CD4-positive, alpha-beta memory T cell (primary cell): ENCODE measurements at regions of chr5 and their contacts with region 1.

Region 1: DNA sequence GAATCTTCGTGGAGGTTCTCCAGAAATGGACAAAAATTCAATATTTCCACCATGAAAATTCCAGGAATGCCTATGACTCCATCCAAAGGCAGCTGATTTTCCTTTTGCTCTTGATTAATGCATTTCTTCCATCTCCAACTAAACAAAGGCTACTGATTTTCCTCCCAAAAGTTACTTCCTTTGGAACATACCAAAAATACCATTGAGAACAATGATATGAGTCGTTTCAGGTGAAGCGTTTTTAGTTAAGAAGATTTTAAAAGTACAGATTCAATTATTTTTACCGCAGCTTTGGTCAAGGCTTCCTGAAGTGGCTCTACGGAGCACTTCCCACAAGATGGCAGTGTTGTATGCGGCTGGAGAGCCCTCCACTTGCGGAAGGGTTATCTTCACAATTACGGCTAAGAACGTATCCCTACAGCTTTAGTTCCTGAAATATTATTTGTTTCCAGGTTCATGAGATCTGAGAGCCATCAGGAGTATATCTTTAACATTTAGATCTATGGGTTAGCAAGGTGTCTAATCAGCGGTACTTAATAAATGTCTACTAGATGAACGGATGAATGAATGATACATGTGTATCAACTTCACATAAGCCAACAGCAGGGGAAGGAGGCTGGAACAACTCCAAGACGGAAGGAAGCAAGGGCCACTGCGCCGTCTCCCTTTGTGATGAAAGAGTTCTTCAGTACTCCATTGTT is 35.9 kb upstream of the ARSB start:
- DNase-seq: peak in 3 of 5 donors; percentile 14 to 21 (median 18)
- H3K4me3 ChIP-seq: no peak overlapping the region
- H3K4me3 Mint-ChIP-seq: peak overlapping the region in 3 of 8 donors; percentile 11 to 33 (median 20)
- H3K27ac ChIP-seq: no peak overlapping the region
- H3K27ac Mint-ChIP-seq: no peak overlapping the region
- H3K4me1 ChIP-seq: no peaks in the 10 kb centered on the region
- H3K4me1 Mint-ChIP-seq: peaks cover 0 to 11% (median 4%) of the 10 kb centered on the region in 4 donors
- H3K27me3 ChIP-seq: peaks cover 12% of the 10 kb centered on the region
- H3K27me3 Mint-ChIP-seq: peaks cover 22 to 53% of the 10 kb centered on the region in 2 donors

Region 2: DNA sequence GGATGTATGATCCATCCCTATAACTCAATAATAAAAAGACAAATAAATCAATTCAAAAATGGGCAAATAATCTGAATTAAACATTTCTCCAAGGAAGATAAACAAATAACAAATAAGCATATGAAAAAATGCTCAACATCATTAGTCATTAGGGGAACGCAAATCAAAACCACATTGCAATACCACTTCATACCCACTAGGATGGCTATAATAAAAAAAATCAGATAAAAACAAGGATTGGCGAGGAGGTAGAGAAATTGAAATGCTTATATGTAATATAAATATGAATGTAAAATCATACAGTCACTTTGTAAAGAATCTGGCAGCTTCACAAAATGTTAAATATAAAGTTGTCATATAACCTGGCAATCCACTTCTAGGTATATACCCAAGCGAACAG is 1192.6 kb before region 1 on chr5:
- CTCF ChIA-PET with region 1: no interaction called
- POLR2A ChIA-PET with region 1: no interaction called
- intact Hi-C with region 1: no loop called
- DNase-seq: no peak
- H3K4me3 ChIP-seq: no peak overlapping the region
- H3K4me3 Mint-ChIP-seq: no peak overlapping the region
- H3K27ac ChIP-seq: no peak overlapping the region
- H3K27ac Mint-ChIP-seq: no peak overlapping the region
- H3K4me1 ChIP-seq: no peaks in the 10 kb centered on the region
- H3K4me1 Mint-ChIP-seq: no peaks in the 10 kb centered on the region
- H3K27me3 ChIP-seq: no peaks in the 10 kb centered on the region
- H3K27me3 Mint-ChIP-seq: peaks cover 5 to 10% of the 10 kb centered on the region in 2 donors

Region 3: DNA sequence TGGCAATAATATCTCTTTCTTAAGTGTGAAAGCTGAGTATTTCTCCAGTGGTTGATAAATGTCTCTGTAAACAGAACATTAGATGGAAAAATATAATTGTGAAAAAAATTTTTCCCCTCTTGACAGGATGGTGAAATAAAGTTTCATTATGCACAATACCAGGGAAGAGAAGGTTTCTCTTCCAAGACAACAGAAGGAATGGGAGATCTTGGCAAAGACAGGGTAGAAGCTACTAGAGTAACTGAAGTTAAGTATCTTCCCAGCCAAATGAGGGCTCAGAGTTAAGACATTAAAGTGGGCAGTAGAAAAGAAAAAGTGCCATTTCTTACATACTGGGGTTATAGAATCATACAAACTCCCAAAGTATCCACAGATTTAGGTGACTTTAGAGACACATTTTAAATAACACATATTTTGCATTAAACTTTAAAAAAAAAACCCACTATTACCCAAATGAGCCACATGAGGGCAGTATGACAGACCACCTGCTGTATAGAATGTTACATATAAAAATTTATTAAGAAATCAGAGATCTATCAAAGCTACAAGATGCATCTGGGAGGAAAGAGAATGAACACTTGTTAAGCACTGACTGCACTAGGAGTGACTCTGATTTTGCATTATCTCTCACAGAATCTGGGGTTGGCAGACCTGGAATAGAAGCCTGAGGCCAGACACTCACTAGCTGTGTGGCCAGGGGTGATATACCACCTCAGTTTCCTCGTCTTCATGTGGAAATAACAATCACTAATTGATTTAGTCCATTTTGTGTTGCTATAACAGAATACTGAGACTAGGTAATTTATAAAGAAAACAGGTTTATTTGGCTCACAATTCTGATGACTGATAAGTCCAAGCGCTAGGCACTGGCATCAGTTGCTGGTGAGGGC is 134.4 kb before region 1 on chr5:
- CTCF ChIA-PET with region 1: interaction called, 10 read pairs
- POLR2A ChIA-PET with region 1: no interaction called
- intact Hi-C with region 1: no loop called
- DNase-seq: peak in 3 of 5 donors; percentile 2 to 14 (median 11)
- H3K4me3 ChIP-seq: no peak overlapping the region
- H3K4me3 Mint-ChIP-seq: no peak overlapping the region
- H3K27ac ChIP-seq: no peak overlapping the region
- H3K27ac Mint-ChIP-seq: peak overlapping the region in 1 of 7 donors; percentile 13
- H3K4me1 ChIP-seq: peaks cover 8% of the 10 kb centered on the region
- H3K4me1 Mint-ChIP-seq: peaks cover 7 to 17% (median 13%) of the 10 kb centered on the region in 4 donors
- H3K27me3 ChIP-seq: no peaks in the 10 kb centered on the region
- H3K27me3 Mint-ChIP-seq: no peaks in the 10 kb centered on the region

Region 4: GRCh38 chr5:78984439-78985115 is 36.4 kb before region 1 on chr5:
- CTCF ChIA-PET with region 1: interaction called, 14 read pairs
- POLR2A ChIA-PET with region 1: interaction called, 8 read pairs
- intact Hi-C with region 1: loop called (anchors 2 kb)
- DNase-seq: peak; percentile 76 to 85 (median 80)
- H3K4me3 ChIP-seq: peak overlapping the region; percentile 34 to 70
- H3K4me3 Mint-ChIP-seq: peak overlapping the region; percentile 90 to 94 (median 92)
- H3K27ac ChIP-seq: peak overlapping the region; percentile 60
- H3K27ac Mint-ChIP-seq: peak overlapping the region; percentile 87 to 95 (median 93)
- H3K4me1 ChIP-seq: peaks cover 17% of the 10 kb centered on the region
- H3K4me1 Mint-ChIP-seq: peaks cover 18 to 31% (median 23%) of the 10 kb centered on the region in 4 donors
- H3K27me3 ChIP-seq: no peaks in the 10 kb centered on the region
- H3K27me3 Mint-ChIP-seq: no peaks in the 10 kb centered on the region

Region 5: GRCh38 chr5:79048437-79048836 is 27.4 kb after region 1 on chr5:
- CTCF ChIA-PET with region 1: interaction called, 12 read pairs
- POLR2A ChIA-PET with region 1: no interaction called
- intact Hi-C with region 1: no loop called
- DNase-seq: no peak
- H3K4me3 ChIP-seq: no peak overlapping the region
- H3K4me3 Mint-ChIP-seq: no peak overlapping the region
- H3K27ac ChIP-seq: no peak overlapping the region
- H3K27ac Mint-ChIP-seq: no peak overlapping the region
- H3K4me1 ChIP-seq: no peaks in the 10 kb centered on the region
- H3K4me1 Mint-ChIP-seq: no peaks in the 10 kb centered on the region
- H3K27me3 ChIP-seq: no peaks in the 10 kb centered on the region
- H3K27me3 Mint-ChIP-seq: peaks cover 5 to 10% of the 10 kb centered on the region in 2 donors

Region 6: DNA sequence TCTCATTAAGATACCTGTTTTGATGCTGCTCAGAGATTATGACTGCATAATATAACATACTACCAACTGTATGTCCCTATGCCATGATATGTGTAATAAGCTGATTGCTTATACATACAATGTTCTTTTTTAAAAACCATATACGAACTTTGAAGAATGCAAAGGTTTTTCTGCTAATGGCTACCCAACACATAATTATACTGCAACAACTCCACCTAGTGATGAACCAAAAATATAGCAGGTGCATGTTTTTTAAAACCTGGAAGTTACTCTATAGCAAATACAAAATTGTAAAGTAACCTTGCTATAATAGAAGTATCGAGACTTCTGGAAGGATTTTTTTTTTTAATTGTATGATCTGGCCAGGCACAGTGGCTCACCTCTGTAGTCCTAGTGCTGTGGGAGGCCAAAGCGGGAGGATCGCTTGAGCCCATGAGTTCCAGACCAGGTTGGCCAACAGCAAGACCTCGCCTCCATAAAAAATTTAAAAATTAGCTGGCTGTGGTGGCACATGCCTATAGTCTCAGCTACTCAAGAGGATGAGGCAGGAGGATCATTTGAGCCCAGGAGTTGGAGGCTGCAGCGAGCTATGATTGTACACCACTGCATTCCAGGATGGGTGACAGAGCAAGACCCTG is 443.8 kb after region 1 on chr5:
- CTCF ChIA-PET with region 1: interaction called, 23 read pairs
- POLR2A ChIA-PET with region 1: no interaction called
- intact Hi-C with region 1: loop called (anchors 1 kb)
- DNase-seq: peak in 4 of 5 donors; percentile 14 to 33 (median 20)
- H3K4me3 ChIP-seq: no peak overlapping the region
- H3K4me3 Mint-ChIP-seq: no peak overlapping the region
- H3K27ac ChIP-seq: no peak overlapping the region
- H3K27ac Mint-ChIP-seq: peak overlapping the region in 1 of 7 donors; percentile 1
- H3K4me1 ChIP-seq: no peaks in the 10 kb centered on the region
- H3K4me1 Mint-ChIP-seq: peaks cover 0 to 2% (median 0%) of the 10 kb centered on the region in 4 donors
- H3K27me3 ChIP-seq: no peaks in the 10 kb centered on the region
- H3K27me3 Mint-ChIP-seq: peaks cover 0 to 7% of the 10 kb centered on the region in 2 donors

Region 7: GRCh38 chr5:79857714-79858409 is 836.9 kb after region 1 on chr5:
- CTCF ChIA-PET with region 1: no interaction called
- POLR2A ChIA-PET with region 1: no interaction called
- intact Hi-C with region 1: loop called (anchors 5 kb)
- DNase-seq: peak; percentile 57 to 71 (median 61)
- H3K4me3 ChIP-seq: no peak overlapping the region
- H3K4me3 Mint-ChIP-seq: no peak overlapping the region
- H3K27ac ChIP-seq: no peak overlapping the region
- H3K27ac Mint-ChIP-seq: no peak overlapping the region
- H3K4me1 ChIP-seq: no peaks in the 10 kb centered on the region
- H3K4me1 Mint-ChIP-seq: peaks cover 0 to 4% (median 0%) of the 10 kb centered on the region in 4 donors
- H3K27me3 ChIP-seq: no peaks in the 10 kb centered on the region
- H3K27me3 Mint-ChIP-seq: peaks cover 3 to 6% of the 10 kb centered on the region in 2 donors